ENCODE measurements at regions of chr6 and their contacts with region 1.

Region 1: GRCh38 chr6:142946181-142946923 is 1.4 kb upstream of the HIVEP2 start:
- DNase-seq: peak; percentile 74 to 98 (median 87)
- ATAC-seq: peak; percentile 65
- H3K4me3 ChIP-seq: peak overlapping the region; percentile 92
- H3K4me3 Mint-ChIP-seq: peak overlapping the region; percentile 94 to 99 (median 96)
- H3K27ac ChIP-seq: peak overlapping the region; percentile 100
- H3K27ac Mint-ChIP-seq: peak overlapping the region; percentile 75 to 100 (median 98)
- H3K4me1 ChIP-seq: peaks cover 21 to 27% of the 10 kb centered on the region in 2 donors
- H3K4me1 Mint-ChIP-seq: peaks cover 30 to 44% (median 41%) of the 10 kb centered on the region in 7 donors
- H3K27me3 ChIP-seq: no peaks in the 10 kb centered on the region
- H3K27me3 Mint-ChIP-seq: peaks cover 0 to 7% (median 0%) of the 10 kb centered on the region in 5 donors

Region 2: GRCh38 chr6:142566628-142567396 is 379.5 kb before region 1 on chr6:
- CTCF ChIA-PET with region 1: no interaction called
- POLR2A ChIA-PET with region 1: interaction called, 6 read pairs
- intact Hi-C with region 1: loop called in 1 of 2 experiments (anchors 10 kb)
- DNase-seq: peak in 8 of 9 donors; percentile 17 to 69 (median 54)
- ATAC-seq: peak; percentile 81
- H3K4me3 ChIP-seq: no peak overlapping the region
- H3K4me3 Mint-ChIP-seq: peak overlapping the region in 7 of 10 donors; percentile 8 to 78 (median 51)
- H3K27ac ChIP-seq: no peak overlapping the region
- H3K27ac Mint-ChIP-seq: peak overlapping the region in 8 of 9 donors; percentile 51 to 92 (median 76)
- H3K4me1 ChIP-seq: peaks cover 0 to 60% of the 10 kb centered on the region in 2 donors
- H3K4me1 Mint-ChIP-seq: peaks cover 19 to 85% (median 74%) of the 10 kb centered on the region in 7 donors
- H3K27me3 ChIP-seq: no peaks in the 10 kb centered on the region
- H3K27me3 Mint-ChIP-seq: no peaks in the 10 kb centered on the region

Region 3: DNA sequence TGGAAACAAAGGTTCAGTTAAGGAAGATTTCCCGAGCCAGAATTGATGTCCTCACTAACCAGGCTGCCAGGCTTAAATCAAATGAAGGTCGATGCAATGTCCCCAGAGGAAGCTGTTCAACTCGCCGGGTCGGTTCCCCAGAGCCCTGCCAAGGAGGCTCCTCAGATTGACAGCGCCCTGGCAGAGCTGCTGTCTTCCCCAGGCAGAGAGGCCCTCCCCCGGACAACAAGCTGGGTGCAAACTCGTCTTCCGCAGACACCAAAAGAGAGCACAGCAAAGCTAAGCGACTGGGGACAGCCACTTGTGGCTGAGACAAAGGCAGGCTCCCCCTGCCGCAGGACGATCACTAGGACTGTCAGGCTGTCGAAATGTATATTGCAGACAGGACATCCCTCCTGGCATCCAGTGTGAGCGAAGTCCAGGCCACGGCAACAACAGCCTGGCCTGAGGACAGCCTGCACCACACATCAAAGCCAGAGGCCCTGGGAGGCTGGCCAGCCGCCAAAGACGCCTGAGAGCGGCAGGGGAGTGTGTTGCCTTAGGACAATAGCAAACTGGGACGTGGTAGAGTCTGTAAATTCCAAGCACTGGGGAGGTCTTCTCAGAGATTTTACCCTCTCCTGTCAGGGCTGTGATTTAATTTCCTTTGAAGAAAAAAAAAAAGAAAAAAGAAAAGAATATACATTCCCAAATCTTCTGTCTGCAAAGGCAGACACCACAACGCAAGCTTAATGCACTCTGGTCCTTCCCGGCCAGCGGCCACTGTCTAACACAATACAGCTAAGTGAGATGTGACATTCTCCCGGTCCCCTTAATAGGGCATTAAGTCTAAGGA is 100.5 kb before region 1 on chr6:
- CTCF ChIA-PET with region 1: no interaction called
- POLR2A ChIA-PET with region 1: interaction called, 16 read pairs
- intact Hi-C with region 1: loop called (anchors 1 kb)
- DNase-seq: peak; percentile 27 to 70 (median 63)
- ATAC-seq: peak; percentile 72
- H3K4me3 ChIP-seq: peak overlapping the region; percentile 44
- H3K4me3 Mint-ChIP-seq: peak overlapping the region; percentile 84 to 93 (median 86)
- H3K27ac ChIP-seq: peak overlapping the region; percentile 84
- H3K27ac Mint-ChIP-seq: peak overlapping the region; percentile 91 to 100 (median 95)
- H3K4me1 ChIP-seq: peaks cover 69 to 74% of the 10 kb centered on the region in 2 donors
- H3K4me1 Mint-ChIP-seq: peaks cover 49 to 99% (median 86%) of the 10 kb centered on the region in 7 donors
- H3K27me3 ChIP-seq: no peaks in the 10 kb centered on the region
- H3K27me3 Mint-ChIP-seq: no peaks in the 10 kb centered on the region

Region 4: DNA sequence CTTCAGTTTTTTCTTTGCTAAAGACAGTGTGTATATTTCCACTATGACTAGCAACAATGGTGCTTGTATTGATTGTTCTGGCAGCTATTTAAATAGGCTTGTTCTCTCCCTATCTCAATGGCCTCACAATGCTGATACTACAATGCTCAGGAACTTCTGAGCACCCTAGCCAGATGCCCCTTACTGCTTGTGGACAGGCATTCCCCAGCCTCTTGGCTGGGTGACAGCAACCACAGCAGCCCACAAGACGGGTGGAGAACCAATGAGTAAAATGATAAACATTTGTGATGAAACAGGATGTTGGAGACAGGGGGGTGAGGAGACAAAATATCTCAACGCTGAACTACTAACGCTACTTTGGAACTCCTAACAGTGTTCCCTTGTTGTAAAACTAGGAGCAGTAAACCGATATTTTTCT is 43.7 kb before region 1 on chr6:
- CTCF ChIA-PET with region 1: no interaction called
- POLR2A ChIA-PET with region 1: interaction called, 66 read pairs
- intact Hi-C with region 1: loop called (anchors 1 kb)
- DNase-seq: peak; percentile 60 to 89 (median 84)
- ATAC-seq: peak; percentile 84
- H3K4me3 ChIP-seq: peak overlapping the region; percentile 26
- H3K4me3 Mint-ChIP-seq: peak overlapping the region in 7 of 10 donors; percentile 77 to 88 (median 83)
- H3K27ac ChIP-seq: peak overlapping the region; percentile 88
- H3K27ac Mint-ChIP-seq: peak overlapping the region in 1 of 9 donors; percentile 95
- H3K4me1 ChIP-seq: peaks cover 48 to 71% of the 10 kb centered on the region in 2 donors
- H3K4me1 Mint-ChIP-seq: peaks cover 13 to 64% (median 41%) of the 10 kb centered on the region in 7 donors
- H3K27me3 ChIP-seq: no peaks in the 10 kb centered on the region
- H3K27me3 Mint-ChIP-seq: no peaks in the 10 kb centered on the region

Region 5: GRCh38 chr6:142993977-142994376 is 47.6 kb after region 1 on chr6:
- CTCF ChIA-PET with region 1: no interaction called
- POLR2A ChIA-PET with region 1: no interaction called
- intact Hi-C with region 1: no loop called
- DNase-seq: no peak
- ATAC-seq: no peak
- H3K4me3 ChIP-seq: no peak overlapping the region
- H3K4me3 Mint-ChIP-seq: no peak overlapping the region
- H3K27ac ChIP-seq: no peak overlapping the region
- H3K27ac Mint-ChIP-seq: no peak overlapping the region
- H3K4me1 ChIP-seq: no peaks in the 10 kb centered on the region
- H3K4me1 Mint-ChIP-seq: peaks cover 0 to 7% (median 4%) of the 10 kb centered on the region in 7 donors
- H3K27me3 ChIP-seq: no peaks in the 10 kb centered on the region
- H3K27me3 Mint-ChIP-seq: peaks cover 0 to 5% (median 0%) of the 10 kb centered on the region in 5 donors

Region 6: DNA sequence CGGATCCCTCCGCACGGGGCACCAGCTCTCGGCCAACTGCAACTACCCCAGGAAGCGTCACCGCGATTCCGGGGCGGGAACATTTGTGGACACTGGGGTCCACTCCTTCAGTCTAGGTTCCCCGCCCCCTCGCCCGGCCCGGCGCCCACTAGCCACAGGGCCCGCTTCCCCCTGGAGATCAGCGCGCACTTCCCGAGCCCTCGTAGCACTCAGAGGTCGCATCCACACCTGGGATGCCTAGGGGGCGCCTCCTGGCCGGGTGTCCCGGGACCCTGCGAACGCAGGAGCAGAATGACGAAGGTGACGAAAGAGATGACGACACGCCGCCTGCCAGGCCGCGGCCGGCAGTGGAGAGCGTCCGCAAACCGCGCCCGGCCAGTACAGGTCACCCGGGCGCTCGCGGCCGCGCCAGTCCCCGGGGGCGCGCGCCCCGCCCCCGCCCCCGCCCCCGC is 114.0 kb after region 1 on chr6:
- CTCF ChIA-PET with region 1: no interaction called
- POLR2A ChIA-PET with region 1: no interaction called
- intact Hi-C with region 1: loop called (anchors 1 to 2 kb)
- DNase-seq: peak; percentile 63 to 82 (median 72)
- ATAC-seq: peak; percentile 85
- H3K4me3 ChIP-seq: peak overlapping the region; percentile 73
- H3K4me3 Mint-ChIP-seq: peak overlapping the region; percentile 88 to 98 (median 94)
- H3K27ac ChIP-seq: peak overlapping the region; percentile 79
- H3K27ac Mint-ChIP-seq: peak overlapping the region; percentile 92 to 98 (median 96)
- H3K4me1 ChIP-seq: peaks cover 8% of the 10 kb centered on the region in 2 donors
- H3K4me1 Mint-ChIP-seq: peaks cover 16 to 34% (median 28%) of the 10 kb centered on the region in 7 donors
- H3K27me3 ChIP-seq: no peaks in the 10 kb centered on the region
- H3K27me3 Mint-ChIP-seq: no peaks in the 10 kb centered on the region

Region 7: GRCh38 chr6:143842902-143843676 is 896.7 kb after region 1 on chr6 and contains the start of gene LTV1:
- CTCF ChIA-PET with region 1: no interaction called
- POLR2A ChIA-PET with region 1: no interaction called
- intact Hi-C with region 1: loop called (anchors 5 kb)
- DNase-seq: peak; percentile 82 to 90 (median 88)
- ATAC-seq: peak; percentile 98
- H3K4me3 ChIP-seq: peak within 1 kb of the TSS; percentile 99
- H3K4me3 Mint-ChIP-seq: peak within 1 kb of the TSS; percentile 93 to 99 (median 96)
- H3K27ac ChIP-seq: peak within 1 kb of the TSS; percentile 92
- H3K27ac Mint-ChIP-seq: peak within 1 kb of the TSS; percentile 91 to 99 (median 97)
- H3K4me1 ChIP-seq: peaks cover 6 to 11% of the 10 kb centered on the region in 2 donors
- H3K4me1 Mint-ChIP-seq: peaks cover 19 to 42% (median 32%) of the 10 kb centered on the region in 7 donors
- H3K27me3 ChIP-seq: no peaks in the 10 kb centered on the region
- H3K27me3 Mint-ChIP-seq: no peaks in the 10 kb centered on the region
- total RNA-seq, gene LTV1: 16.5 to 29.6 (median 22.6) TPM

Measured in naive thymus-derived CD4-positive, alpha-beta T cell (primary cell).